ENCODE measurements at regions of chrX and their contacts with region 1.

Region 1: DNA sequence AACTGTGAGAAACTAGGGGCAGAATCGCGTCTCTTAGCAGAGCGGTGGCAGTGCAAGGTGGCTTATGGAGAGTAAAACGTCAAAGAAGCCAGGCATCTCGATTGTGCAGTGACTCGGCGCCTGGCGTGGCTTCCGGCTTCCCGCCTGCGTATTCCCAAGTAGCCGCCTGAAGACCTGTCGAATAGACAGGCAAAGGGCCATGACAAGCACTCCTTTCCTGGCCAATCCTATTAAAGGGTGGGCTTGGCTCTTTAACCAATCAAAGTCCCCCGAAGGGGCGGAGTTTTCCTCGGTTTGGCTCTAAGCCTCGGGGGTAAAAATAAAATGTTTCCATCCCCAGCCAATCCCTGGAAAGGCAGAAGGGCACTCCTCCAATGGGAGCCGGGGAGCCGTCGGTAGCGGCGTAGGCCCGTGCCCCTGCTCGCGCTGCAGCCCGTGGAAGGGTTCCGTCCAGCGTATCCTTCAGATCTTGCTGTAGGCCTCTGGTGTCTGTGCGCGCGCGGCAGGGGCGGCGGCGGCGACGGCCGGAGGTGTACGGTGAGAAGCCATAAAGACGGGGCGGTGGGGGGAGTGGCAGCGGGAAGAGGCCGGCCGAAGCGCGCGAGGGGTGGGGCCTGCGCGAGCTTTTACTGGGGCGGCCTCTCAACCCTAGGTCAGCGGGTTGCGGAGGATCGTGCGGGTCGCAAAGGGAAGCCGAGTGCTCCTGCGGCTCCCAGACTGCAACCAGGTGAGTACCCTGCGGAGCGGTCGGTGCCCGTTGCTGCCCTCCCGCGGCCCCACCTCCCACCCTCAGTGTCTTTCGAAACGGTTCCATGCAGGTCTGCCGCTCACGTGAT is at the start of gene KANTR:
- DNase-seq: peak; percentile 94
- ATAC-seq: peak; percentile 93
- H3K4me3 ChIP-seq: peak within 1 kb of the TSS; percentile 64 to 80 (median 79)
- H3K27ac ChIP-seq: peak within 1 kb of the TSS; percentile 90
- H3K4me1 ChIP-seq: 0 out of 2 replicates have a peak, but pooled peaks cover 5% of the 10 kb centered on the region
- H3K27me3 ChIP-seq: no peaks in the 10 kb centered on the region; a peak in 1 of 5 replicates
- CTCF ChIP-seq: no peak; the same call in 1 of the 2 replicates
- EP300 ChIP-seq: no peak
- POLR2A ChIP-seq: peak; percentile 43 to 47
- RAD21 ChIP-seq: no peak
- total RNA-seq, gene KANTR: 3.5 and 4.4 TPM in 2 replicates

Region 2: GRCh38 chrX:53071604-53072417 is 22.2 kb before region 1 on chrX:
- CTCF ChIA-PET with region 1: interaction called, 10 read pairs
- POLR2A ChIA-PET with region 1: no interaction called
- in situ Hi-C with region 1: no loop called
- intact Hi-C with region 1: loop called (anchors 1 kb)
- DNase-seq: peak; percentile 57
- ATAC-seq: peak; percentile 81
- H3K4me3 ChIP-seq: peak overlapping the region; percentile 34 to 73 (median 51); a peak in 5 of 6 replicates
- H3K27ac ChIP-seq: no peak overlapping the region
- H3K4me1 ChIP-seq: no peaks in the 10 kb centered on the region
- H3K27me3 ChIP-seq: no peaks in the 10 kb centered on the region
- CTCF ChIP-seq: peak; percentile 84
- EP300 ChIP-seq: no peak
- POLR2A ChIP-seq: no peak
- RAD21 ChIP-seq: peak; percentile 63

Region 3: DNA sequence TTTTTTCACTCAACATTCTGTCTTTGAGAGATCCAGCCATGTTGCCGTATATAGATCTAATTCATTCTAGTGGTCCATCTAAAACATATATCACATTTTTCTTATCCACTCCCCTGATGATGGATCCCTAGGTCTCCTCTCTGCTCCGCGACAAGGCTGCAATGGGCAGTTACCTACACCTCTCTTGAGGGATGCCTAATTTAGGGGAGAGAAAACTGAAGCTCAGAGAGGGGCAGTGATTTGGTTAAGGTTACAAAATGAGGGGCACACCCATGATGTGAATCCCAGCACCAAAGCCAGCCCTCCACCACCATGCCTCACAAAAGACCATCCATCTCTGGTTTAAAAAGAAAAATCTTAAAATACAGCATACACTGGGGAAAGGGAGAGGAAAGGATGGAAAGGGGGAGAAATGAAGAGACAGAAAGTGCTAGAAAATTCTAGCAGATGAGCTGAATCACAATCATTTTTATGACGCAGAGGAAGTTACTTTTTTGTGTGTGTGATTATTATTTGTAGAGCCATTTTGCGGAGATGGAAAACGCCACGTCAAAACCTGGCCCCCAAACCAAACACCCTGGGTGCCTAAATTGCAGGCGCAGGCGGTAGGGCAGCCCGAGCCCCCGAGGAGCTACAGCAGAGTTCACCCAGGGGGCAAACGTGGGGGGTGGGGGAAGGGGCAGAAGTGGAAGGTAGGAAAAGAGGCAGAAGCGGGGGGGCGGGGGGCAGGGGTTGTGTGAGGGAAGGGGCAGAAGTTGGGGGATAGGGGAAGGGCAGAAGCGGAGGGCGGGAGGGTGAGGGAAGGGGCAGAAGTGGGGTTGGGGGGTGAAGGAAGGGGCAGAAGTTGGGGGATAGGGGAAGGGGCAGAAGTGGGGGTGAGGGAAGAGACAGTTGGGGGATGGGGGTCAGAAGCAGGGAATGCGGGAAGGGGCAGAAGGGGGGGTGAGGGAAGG is 13.1 kb before region 1 on chrX:
- CTCF ChIA-PET with region 1: no interaction called
- POLR2A ChIA-PET with region 1: interaction called, 5 read pairs
- in situ Hi-C with region 1: no loop called
- intact Hi-C with region 1: loop called (anchors 1 kb)
- DNase-seq: no peak
- ATAC-seq: no peak
- H3K4me3 ChIP-seq: no peak overlapping the region
- H3K27ac ChIP-seq: no peak overlapping the region
- H3K4me1 ChIP-seq: peaks cover 13% of the 10 kb centered on the region; the same call in 1 of the 2 replicates
- H3K27me3 ChIP-seq: no peaks in the 10 kb centered on the region
- CTCF ChIP-seq: no peak
- EP300 ChIP-seq: no peak
- POLR2A ChIP-seq: no peak
- RAD21 ChIP-seq: no peak